Common myeloid progenitor, CD34-positive (primary cell): ENCODE measurements at regions of chr6 and their contacts with region 1.

Region 1: DNA sequence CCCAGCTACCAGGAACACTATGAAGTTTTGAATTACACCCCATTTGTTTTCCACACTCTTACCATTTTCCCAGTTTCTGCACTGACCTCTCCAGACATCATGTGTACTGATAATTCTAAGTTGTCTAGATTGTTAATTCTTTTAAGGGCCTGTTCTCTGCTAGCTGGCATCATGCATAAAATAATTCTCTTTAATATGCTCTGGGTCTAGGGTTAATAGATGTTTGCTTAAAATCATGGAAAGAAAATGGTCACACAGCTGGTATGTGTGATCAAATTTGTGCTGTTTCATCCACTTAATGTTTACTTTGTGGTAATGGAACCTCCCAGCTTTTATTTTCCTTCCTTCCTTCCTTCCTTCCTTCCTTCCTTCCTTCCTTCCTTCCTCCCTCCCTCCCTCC is 49.1 kb downstream of the HFE start:
- DNase-seq: peak in 2 of 3 donors; percentile 36 to 49
- H3K4me3 ChIP-seq: no peak overlapping the region
- H3K27ac ChIP-seq: no peak overlapping the region
- H3K4me1 ChIP-seq: peaks cover 0 to 5% (median 0%) of the 10 kb centered on the region in 4 experiments
- H3K27me3 ChIP-seq: no peaks in the 10 kb centered on the region

Region 2: GRCh38 chr6:25961619-25962148 is 174.6 kb before region 1 on chr6:
- CTCF ChIA-PET with region 1: no interaction called
- POLR2A ChIA-PET with region 1: no interaction called
- DNase-seq: no peak
- H3K4me3 ChIP-seq: peak overlapping the region in 6 of 7 experiments; percentile 73 to 98 (median 80)
- H3K27ac ChIP-seq: peak overlapping the region in 1 of 2 experiments; percentile 93
- H3K4me1 ChIP-seq: peaks cover 24 to 45% (median 30%) of the 10 kb centered on the region in 4 experiments
- H3K27me3 ChIP-seq: no peaks in the 10 kb centered on the region

Region 3: GRCh38 chr6:26122793-26123674 is 13.3 kb before region 1 on chr6:
- CTCF ChIA-PET with region 1: interaction called, 12 read pairs
- POLR2A ChIA-PET with region 1: interaction called, 13 read pairs
- DNase-seq: peak; percentile 97 to 99 (median 98)
- H3K4me3 ChIP-seq: peak overlapping the region; percentile 56 to 100 (median 96)
- H3K27ac ChIP-seq: peak overlapping the region; percentile 84 to 96
- H3K4me1 ChIP-seq: peaks cover 11 to 38% (median 26%) of the 10 kb centered on the region in 4 experiments
- H3K27me3 ChIP-seq: no peaks in the 10 kb centered on the region